Activated naive CD4-positive, alpha-beta T cell treated with anti-CD3 and anti-CD28 coated beads for 36 hours (primary cell): ENCODE measurements at regions of chr1 and their contacts with region 1.

Region 1: DNA sequence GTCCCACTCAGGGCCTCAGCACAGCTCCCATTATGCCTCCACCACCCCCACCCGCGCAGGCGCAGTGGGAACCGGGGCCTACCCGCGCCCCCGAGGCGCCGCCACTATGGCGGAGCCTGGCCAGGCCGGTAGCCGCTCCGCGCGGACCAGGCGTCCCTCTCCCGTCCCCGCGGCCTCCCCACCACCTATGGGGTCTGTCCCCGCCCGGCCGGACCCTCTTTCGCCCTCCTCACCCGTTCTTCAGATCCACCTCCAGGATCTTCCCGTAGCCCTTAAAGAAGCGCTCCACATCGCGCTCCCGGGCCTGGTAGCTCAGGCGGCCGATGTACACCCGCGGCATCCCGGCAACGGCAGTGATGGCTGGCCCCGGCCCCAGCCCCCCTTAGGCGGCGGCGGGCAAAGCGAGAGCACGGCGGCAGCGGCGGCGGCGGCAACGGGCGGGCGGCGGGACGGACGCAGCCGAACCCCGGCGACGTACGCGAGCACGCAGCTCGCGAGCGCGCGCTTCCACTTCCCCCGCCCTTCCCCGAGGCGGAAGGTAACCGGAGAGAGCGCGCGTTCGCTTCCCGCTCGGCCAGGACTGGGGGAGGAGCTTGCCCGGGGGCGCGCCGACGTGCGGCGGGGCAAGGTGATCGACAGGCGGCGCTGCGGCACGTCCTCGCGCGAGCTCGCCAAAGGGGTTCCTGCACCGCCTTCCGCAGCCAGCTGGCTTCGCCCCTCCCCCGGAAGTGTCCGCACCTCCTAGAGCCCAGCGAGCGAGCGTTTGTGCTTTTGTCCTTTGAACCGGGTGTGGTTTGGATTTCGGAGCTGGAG is at the start of gene SRSF4:
- DNase-seq: peak; percentile 99
- H3K4me3 Mint-ChIP-seq: peak within 1 kb of the TSS; percentile 93
- H3K27ac Mint-ChIP-seq: peak within 1 kb of the TSS; percentile 98
- H3K4me1 Mint-ChIP-seq: peaks cover 37% of the 10 kb centered on the region
- H3K27me3 Mint-ChIP-seq: no peaks in the 10 kb centered on the region
- total RNA-seq, gene SRSF4: 166 to 170 TPM

Region 2: GRCh38 chr1:28648474-28649198 is 533.0 kb before region 1 on chr1 and contains the start of gene RNU11:
- CTCF ChIA-PET with region 1: no interaction called
- intact Hi-C with region 1: loop called (anchors 1 kb)
- DNase-seq: peak; percentile 92
- H3K4me3 Mint-ChIP-seq: peak within 1 kb of the TSS; percentile 92
- H3K27ac Mint-ChIP-seq: peak within 1 kb of the TSS; percentile 99
- H3K4me1 Mint-ChIP-seq: peaks cover 28% of the 10 kb centered on the region
- H3K27me3 Mint-ChIP-seq: no peaks in the 10 kb centered on the region
- total RNA-seq, gene RNU11: not detected

Region 3: GRCh38 chr1:28914228-28915030 is 267.2 kb before region 1 on chr1 and contains the start of gene EPB41:
- CTCF ChIA-PET with region 1: no interaction called
- intact Hi-C with region 1: loop called (anchors 1 kb)
- DNase-seq: peak; percentile 93
- H3K4me3 Mint-ChIP-seq: peak within 1 kb of the TSS; percentile 90
- H3K27ac Mint-ChIP-seq: peak within 1 kb of the TSS; percentile 88
- H3K4me1 Mint-ChIP-seq: peaks cover 46% of the 10 kb centered on the region
- H3K27me3 Mint-ChIP-seq: no peaks in the 10 kb centered on the region
- total RNA-seq, gene EPB41: 97.4 to 100 TPM

Region 4: GRCh38 chr1:29062157-29062942 is 119.3 kb before region 1 on chr1:
- CTCF ChIA-PET with region 1: no interaction called
- intact Hi-C with region 1: loop called (anchors 1 kb)
- DNase-seq: peak; percentile 72
- H3K4me3 Mint-ChIP-seq: peak overlapping the region; percentile 55
- H3K27ac Mint-ChIP-seq: peak overlapping the region; percentile 99
- H3K4me1 Mint-ChIP-seq: peaks cover 53% of the 10 kb centered on the region
- H3K27me3 Mint-ChIP-seq: no peaks in the 10 kb centered on the region

Region 5: GRCh38 chr1:29202584-29203340 is 21.1 kb after region 1 on chr1:
- CTCF ChIA-PET with region 1: interaction called, 15 read pairs
- intact Hi-C with region 1: loop called (anchors 1 kb)
- DNase-seq: peak; percentile 97
- H3K4me3 Mint-ChIP-seq: no peak overlapping the region
- H3K27ac Mint-ChIP-seq: no peak overlapping the region
- H3K4me1 Mint-ChIP-seq: peaks cover 6% of the 10 kb centered on the region
- H3K27me3 Mint-ChIP-seq: no peaks in the 10 kb centered on the region

Region 6: DNA sequence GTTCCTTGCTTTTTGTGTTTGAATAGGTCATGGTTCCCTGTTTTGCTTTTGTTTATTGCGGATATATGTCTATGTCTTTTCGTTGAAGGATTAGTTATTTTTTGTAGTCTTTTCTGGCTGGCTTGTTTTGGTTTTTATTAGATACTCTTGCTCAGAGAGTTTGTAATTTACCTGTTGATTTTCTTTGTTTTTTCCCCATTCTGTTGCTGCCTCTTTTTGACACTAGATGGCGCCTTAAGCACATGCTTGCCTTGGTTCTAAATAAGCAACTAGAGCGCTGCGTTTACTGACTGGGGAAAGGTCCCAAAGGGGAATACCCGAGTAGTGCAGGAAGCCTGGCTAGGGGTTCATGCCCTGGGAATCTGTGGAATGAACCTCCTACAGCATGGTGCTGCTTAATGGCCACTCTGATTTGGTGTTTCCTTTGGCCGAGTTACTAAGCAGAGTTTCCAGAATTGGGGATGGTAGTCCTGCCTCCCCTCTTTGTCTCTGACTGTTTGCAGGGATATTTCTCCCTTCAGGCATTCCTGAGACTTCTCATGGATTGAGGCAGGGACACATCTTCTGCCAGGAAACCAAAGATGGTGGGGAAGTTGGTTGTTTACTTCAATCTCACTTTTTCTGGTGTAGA is 197.9 kb after region 1 on chr1:
- CTCF ChIA-PET with region 1: no interaction called
- intact Hi-C with region 1: no loop called
- DNase-seq: peak; percentile 38
- H3K4me3 Mint-ChIP-seq: no peak overlapping the region
- H3K27ac Mint-ChIP-seq: no peak overlapping the region
- H3K4me1 Mint-ChIP-seq: no peaks in the 10 kb centered on the region
- H3K27me3 Mint-ChIP-seq: peaks cover 33% of the 10 kb centered on the region